CD8-positive, alpha-beta T cell (primary cell): ENCODE measurements at regions of chr3 and their contacts with region 1.

Region 1: GRCh38 chr3:11335056-11335608 is 62.9 kb downstream of the ATG7 start:
- DNase-seq: peak in 4 of 9 experiments; percentile 13 to 74 (median 46)
- ATAC-seq: peak; percentile 75
- H3K4me3 ChIP-seq: no peak overlapping the region
- H3K4me3 Mint-ChIP-seq: no peak overlapping the region
- H3K27ac ChIP-seq: no peak overlapping the region
- H3K27ac Mint-ChIP-seq: no peak overlapping the region
- H3K4me1 ChIP-seq: no peaks in the 10 kb centered on the region
- H3K4me1 Mint-ChIP-seq: peaks cover 2% of the 10 kb centered on the region
- H3K27me3 ChIP-seq: no peaks in the 10 kb centered on the region
- H3K27me3 Mint-ChIP-seq: no peaks in the 10 kb centered on the region
- CTCF ChIP-seq: peak; percentile 66

Region 2: DNA sequence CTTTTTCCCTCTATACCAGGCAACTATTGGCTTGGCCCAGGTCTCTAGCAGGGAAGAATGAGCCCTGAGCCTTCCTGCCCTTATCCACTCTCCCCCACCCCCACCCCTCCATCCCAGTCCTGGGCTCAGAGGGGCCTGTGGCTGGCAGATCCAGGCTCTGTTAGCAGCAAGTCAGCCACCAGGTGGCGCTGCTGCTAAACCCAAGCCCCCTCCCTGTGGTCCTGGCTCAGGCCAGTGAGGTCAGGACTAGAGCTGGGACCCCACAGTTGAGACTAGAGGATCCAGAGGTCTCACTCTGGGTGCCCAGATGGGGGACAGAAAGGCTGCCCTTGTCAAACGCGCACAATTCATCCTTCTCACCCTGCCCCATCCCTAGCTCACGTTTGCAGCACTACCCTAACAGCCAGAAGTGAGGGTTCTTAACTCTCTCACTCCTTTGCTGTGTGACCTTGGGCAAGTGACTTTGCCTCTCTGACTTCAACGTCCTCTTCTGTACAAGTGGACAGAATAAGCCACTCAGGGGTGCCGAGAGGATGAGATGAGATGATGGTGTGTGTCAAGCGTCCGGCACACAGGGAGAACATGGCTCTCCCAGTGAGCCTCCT is 389.3 kb before region 1 on chr3:
- CTCF ChIA-PET with region 1: interaction called, 6 read pairs
- POLR2A ChIA-PET with region 1: no interaction called
- intact Hi-C with region 1: loop called in 1 of 2 experiments (anchors 2 kb)
- DNase-seq: peak; percentile 3 to 55 (median 39)
- ATAC-seq: no peak
- H3K4me3 ChIP-seq: no peak overlapping the region
- H3K4me3 Mint-ChIP-seq: no peak overlapping the region
- H3K27ac ChIP-seq: no peak overlapping the region
- H3K27ac Mint-ChIP-seq: no peak overlapping the region
- H3K4me1 ChIP-seq: no peaks in the 10 kb centered on the region
- H3K4me1 Mint-ChIP-seq: no peaks in the 10 kb centered on the region
- H3K27me3 ChIP-seq: no peaks in the 10 kb centered on the region
- H3K27me3 Mint-ChIP-seq: peaks cover 15% of the 10 kb centered on the region
- CTCF ChIP-seq: peak; percentile 34

Region 3: DNA sequence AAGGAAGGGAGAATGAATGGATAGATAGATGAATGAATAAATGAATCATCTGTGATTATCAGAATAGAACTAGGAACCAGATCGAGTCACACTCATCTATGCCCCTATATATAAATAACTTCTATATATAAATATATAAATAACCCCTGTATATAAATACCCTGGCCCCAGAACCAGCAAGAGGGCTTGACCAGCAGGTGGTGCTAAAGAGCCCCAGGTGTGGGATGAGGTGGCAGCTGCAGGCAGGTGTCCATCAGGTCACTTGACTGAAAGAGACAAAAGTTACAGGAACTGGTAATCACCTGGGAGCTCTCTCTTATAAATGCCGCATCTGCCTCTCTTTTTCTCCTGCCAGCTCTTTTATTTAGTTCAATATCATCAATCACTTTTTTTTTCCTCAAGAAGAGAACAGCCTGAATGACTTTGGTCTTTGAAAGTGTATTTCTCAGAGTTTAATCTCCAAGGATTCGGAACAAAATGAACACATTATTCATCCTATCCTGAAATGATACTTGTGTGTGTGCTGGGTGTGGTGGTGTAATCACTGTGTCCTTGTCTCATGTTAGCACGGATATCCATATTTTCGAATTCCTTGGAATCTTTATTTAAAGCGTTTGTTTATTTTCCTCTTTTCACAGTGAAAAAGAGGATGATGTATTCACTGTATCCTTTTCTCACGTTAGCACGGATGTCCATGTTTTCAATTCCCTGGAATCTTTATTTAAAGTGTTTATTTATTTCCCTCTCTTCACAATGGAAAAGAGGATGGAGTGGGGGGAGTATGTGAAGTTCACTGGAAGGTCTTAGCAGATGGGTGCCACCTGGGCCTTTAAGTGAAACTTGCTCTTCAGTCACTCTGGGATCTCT is 98.3 kb before region 1 on chr3:
- CTCF ChIA-PET with region 1: interaction called, 113 read pairs
- POLR2A ChIA-PET with region 1: no interaction called
- intact Hi-C with region 1: loop called (anchors 1 kb)
- DNase-seq: peak; percentile 65 to 86 (median 77)
- ATAC-seq: peak; percentile 68
- H3K4me3 ChIP-seq: no peak overlapping the region
- H3K4me3 Mint-ChIP-seq: no peak overlapping the region
- H3K27ac ChIP-seq: no peak overlapping the region
- H3K27ac Mint-ChIP-seq: no peak overlapping the region
- H3K4me1 ChIP-seq: no peaks in the 10 kb centered on the region
- H3K4me1 Mint-ChIP-seq: no peaks in the 10 kb centered on the region
- H3K27me3 ChIP-seq: no peaks in the 10 kb centered on the region
- H3K27me3 Mint-ChIP-seq: peaks cover 7% of the 10 kb centered on the region
- CTCF ChIP-seq: peak; percentile 95

Region 4: GRCh38 chr3:11350374-11350773 is 15.2 kb after region 1 on chr3:
- CTCF ChIA-PET with region 1: interaction called, 11 read pairs
- POLR2A ChIA-PET with region 1: no interaction called
- intact Hi-C with region 1: no loop called
- DNase-seq: no peak
- ATAC-seq: no peak
- H3K4me3 ChIP-seq: no peak overlapping the region
- H3K4me3 Mint-ChIP-seq: no peak overlapping the region
- H3K27ac ChIP-seq: no peak overlapping the region
- H3K27ac Mint-ChIP-seq: no peak overlapping the region
- H3K4me1 ChIP-seq: no peaks in the 10 kb centered on the region
- H3K4me1 Mint-ChIP-seq: no peaks in the 10 kb centered on the region
- H3K27me3 ChIP-seq: no peaks in the 10 kb centered on the region
- H3K27me3 Mint-ChIP-seq: no peaks in the 10 kb centered on the region
- CTCF ChIP-seq: no peak

Region 5: DNA sequence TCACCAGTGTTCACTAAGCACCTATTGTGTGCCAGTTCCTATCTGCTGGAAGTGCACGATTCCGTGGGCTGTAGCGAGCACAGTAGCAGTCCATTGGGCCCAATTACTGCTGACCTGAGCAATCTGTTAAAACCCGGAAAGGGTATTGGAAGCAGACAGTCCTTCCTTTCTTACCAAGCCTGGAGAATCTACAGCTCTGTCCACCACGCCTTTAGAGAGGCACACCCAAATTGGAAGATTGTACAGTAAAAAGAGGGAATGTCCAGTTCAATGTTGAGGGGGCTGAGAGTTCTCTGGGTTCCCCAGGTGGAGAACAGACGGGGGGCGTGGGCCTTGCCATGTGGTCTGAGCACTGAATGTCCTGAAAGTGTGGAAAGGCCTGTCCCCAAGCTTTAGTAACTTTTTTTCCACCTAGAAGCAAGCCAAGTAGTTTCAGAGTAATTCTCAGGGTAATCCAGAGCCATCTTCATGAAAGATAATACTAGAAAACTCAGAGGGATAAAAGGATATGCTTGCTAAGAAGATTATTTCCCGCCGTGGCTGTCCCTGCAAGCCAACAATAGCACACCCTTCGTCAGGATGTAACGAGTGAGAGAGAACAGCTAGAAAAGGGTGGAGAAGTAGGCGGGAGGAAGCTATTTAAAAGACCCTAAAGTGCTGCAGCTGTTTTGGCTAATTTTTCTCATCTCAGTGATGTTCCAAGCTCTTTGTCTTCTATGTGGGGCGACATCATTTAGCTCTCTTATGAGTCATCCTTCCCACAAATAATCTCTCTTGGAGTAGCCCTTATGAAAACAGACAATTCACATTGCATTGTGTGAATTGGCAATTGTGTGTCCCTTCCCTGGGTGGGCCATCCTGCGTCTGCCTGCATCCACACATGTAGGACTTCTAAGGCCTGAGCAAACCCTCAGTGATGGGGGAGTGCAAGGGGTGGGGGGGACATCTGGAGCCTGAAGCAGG is 118.0 kb after region 1 on chr3:
- CTCF ChIA-PET with region 1: no interaction called
- POLR2A ChIA-PET with region 1: no interaction called
- intact Hi-C with region 1: no loop called
- DNase-seq: no peak
- ATAC-seq: no peak
- H3K4me3 ChIP-seq: no peak overlapping the region
- H3K4me3 Mint-ChIP-seq: no peak overlapping the region
- H3K27ac ChIP-seq: no peak overlapping the region
- H3K27ac Mint-ChIP-seq: no peak overlapping the region
- H3K4me1 ChIP-seq: no peaks in the 10 kb centered on the region
- H3K4me1 Mint-ChIP-seq: no peaks in the 10 kb centered on the region
- H3K27me3 ChIP-seq: no peaks in the 10 kb centered on the region
- H3K27me3 Mint-ChIP-seq: no peaks in the 10 kb centered on the region
- CTCF ChIP-seq: no peak